ENCODE measurements at regions of chr12 and their contacts with region 1.

Region 1: DNA sequence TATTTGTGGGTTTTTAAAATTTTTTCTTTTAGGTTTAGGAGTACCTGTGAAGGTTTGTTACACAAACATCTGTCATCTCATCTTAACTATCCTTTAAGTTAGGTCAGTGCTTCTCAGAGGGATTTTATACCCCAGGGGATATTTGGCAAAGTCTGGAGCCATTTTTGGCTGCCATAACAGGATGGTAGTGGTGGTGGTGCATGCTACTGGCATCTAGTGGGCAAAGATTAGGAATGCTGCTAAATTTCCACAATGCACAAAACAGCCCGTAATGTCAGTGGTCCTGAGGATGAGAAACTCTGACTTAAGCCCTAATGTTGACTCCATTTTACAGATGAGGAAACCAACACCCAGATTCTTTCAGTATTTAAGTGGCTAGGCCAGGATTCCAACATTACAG is 85.2 kb upstream of the MYF6 start:
- H3K4me3 ChIP-seq: no peak overlapping the region
- H3K27ac ChIP-seq: no peak overlapping the region
- H3K4me1 ChIP-seq: peaks cover 7% of the 10 kb centered on the region
- CTCF ChIP-seq: no peak

Region 2: GRCh38 chr12:80576641-80577418 is 45.4 kb before region 1 on chr12:
- CTCF ChIA-PET with region 1: no interaction called
- POLR2A ChIA-PET with region 1: no interaction called
- H3K4me3 ChIP-seq: no peak overlapping the region
- H3K27ac ChIP-seq: no peak overlapping the region
- H3K4me1 ChIP-seq: no peaks in the 10 kb centered on the region
- CTCF ChIP-seq: no peak

Region 3: GRCh38 chr12:80607361-80608135 is 14.7 kb before region 1 on chr12:
- CTCF ChIA-PET with region 1: interaction called, 10 read pairs
- POLR2A ChIA-PET with region 1: no interaction called
- H3K4me3 ChIP-seq: no peak overlapping the region
- H3K27ac ChIP-seq: no peak overlapping the region
- H3K4me1 ChIP-seq: no peaks in the 10 kb centered on the region
- CTCF ChIP-seq: no peak

Region 4: GRCh38 chr12:80684077-80684495 is 61.8 kb after region 1 on chr12:
- CTCF ChIA-PET with region 1: no interaction called
- POLR2A ChIA-PET with region 1: no interaction called
- H3K4me3 ChIP-seq: no peak overlapping the region
- H3K27ac ChIP-seq: no peak overlapping the region
- H3K4me1 ChIP-seq: no peaks in the 10 kb centered on the region
- CTCF ChIP-seq: no peak

Measured in HEK293 (cell line).